Tibial artery (tissue), 4 donors: ENCODE measurements at regions of chr16 and their contacts with region 1.

Region 1: DNA sequence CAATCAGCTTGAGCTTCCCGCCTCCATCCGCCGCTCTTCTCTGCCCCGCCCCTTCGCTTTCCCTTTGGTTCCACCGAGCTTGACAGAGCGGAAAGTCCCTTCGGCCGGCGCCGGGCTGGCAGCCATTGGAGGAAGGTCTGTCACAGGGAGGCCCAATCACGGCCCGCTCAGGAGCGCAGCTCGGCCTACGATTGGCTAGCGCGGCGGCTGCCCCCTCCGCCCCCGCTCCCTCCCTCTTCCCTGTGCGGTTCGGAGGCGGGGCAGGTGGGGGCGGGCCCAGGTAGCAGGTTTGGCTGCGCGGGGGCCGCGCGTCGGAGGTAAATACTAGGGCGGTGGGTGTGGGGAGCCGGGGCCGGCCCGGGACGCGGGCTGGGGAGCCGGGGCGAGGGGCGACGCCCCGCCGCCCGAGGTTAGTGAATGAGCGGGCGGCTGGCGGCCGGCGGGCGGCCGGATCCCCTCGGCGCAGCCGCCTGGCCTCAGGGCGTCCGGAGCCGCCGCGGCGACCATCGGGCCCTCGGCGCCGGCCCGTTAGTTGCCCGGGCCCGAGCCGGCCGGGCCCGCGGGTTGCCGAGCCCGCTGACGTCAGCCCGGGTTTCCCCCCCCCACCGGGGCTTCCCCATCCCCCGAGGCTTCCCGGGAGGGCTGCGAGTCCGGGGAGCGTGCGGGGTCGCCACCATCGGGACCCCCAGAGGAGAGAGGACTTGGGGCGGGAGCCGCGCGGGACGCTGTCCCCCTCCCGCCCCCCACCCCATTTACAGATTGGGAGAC is at the start of gene CYLD:
- DNase-seq: peak; percentile 100
- H3K4me3 ChIP-seq: peak within 1 kb of the TSS; percentile 82 to 90
- H3K27ac ChIP-seq: peak within 1 kb of the TSS; percentile 89
- H3K4me1 ChIP-seq: peaks cover 0 to 47% (median 27%) of the 10 kb centered on the region in 4 donors
- H3K27me3 ChIP-seq: no peaks in the 10 kb centered on the region
- CTCF ChIP-seq: no peak

Region 2: GRCh38 chr16:49855280-49855821 is 886.6 kb before region 1 on chr16:
- intact Hi-C with region 1: loop called (anchors 10 kb)
- DNase-seq: peak; percentile 82 to 95
- H3K4me3 ChIP-seq: peak overlapping the region; percentile 74 to 86
- H3K27ac ChIP-seq: peak overlapping the region; percentile 86 to 89
- H3K4me1 ChIP-seq: peaks cover 0 to 47% (median 34%) of the 10 kb centered on the region in 4 donors
- H3K27me3 ChIP-seq: no peaks in the 10 kb centered on the region
- CTCF ChIP-seq: no peak

Region 3: GRCh38 chr16:50002190-50002589 is 739.8 kb before region 1 on chr16:
- intact Hi-C with region 1: no loop called
- DNase-seq: no peak
- H3K4me3 ChIP-seq: no peak overlapping the region
- H3K27ac ChIP-seq: no peak overlapping the region
- H3K4me1 ChIP-seq: no peaks in the 10 kb centered on the region
- H3K27me3 ChIP-seq: no peaks in the 10 kb centered on the region
- CTCF ChIP-seq: no peak

Region 4: DNA sequence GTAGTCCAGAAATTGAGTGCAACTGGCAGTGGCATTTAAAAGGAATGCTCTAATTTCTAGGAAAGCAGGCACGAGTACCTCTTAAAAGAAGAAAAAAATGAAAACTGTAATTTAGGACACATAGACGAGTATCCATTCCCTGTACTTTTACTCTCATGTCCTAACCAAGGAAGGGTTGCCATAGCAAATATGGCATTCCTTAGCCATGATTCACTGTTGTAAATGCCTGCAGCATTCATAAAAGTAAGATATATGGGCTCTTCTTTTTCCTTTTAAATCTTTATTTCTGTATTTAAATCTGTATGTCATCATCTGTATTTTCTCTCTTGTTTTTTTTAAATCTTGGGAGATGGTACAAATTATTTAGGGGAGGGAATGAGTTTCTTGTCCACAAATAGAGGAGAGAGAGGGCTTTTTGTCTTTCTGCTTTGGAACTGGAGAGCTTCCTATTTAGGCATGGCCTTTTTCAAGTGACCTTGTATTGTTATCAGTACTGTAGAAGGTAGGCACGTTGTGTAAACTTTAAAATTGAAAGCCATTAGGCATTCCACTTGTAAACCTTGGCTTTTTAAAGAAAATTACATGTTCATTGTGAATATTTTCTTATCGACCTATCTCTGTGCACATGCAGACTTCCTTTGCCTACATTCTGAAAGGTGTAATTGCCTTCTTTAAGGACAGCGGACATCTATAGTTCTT is 538.9 kb before region 1 on chr16:
- intact Hi-C with region 1: loop called (anchors 10 kb)
- DNase-seq: no peak
- H3K4me3 ChIP-seq: no peak overlapping the region
- H3K27ac ChIP-seq: peak overlapping the region; percentile 61 to 63
- H3K4me1 ChIP-seq: peaks cover 0 to 76% (median 50%) of the 10 kb centered on the region in 4 donors
- H3K27me3 ChIP-seq: no peaks in the 10 kb centered on the region
- CTCF ChIP-seq: no peak

Region 5: DNA sequence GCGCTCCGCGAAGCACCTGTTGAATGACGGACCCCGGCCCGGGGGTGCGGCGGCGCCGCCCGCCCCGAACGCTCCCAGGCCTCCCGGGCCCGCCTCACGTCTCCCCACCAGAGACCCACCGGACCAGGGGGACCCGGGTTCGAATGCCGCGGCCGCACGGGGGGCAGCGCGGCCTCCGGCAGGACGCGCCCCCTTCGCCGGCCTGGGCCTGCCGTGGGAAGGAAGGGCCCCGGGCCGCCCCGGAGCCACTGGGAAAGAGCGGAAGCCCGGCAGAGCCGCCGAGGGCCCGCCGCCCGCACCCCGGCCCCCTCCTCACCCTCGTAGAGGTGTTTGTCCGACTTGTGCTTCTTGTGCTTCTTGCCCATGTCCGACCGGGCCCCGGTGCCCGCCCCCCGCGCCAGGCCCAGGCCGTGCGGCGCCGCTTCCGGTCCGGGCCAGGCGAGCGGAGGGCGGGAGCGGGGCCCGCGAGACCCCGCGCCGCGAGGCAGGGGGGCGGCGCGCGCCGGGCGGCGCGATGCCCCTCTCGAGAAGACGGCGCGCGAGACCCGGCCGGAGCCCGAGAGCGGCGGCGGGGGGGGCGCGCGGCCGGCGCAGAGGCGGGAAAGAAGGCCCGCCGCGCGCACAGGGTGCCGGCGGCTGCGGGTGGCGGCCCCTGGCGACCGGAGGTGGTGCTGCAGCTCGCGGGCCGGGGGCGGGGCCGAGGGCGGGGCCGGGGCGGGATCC is 373.4 kb before region 1 on chr16 and contains the start of gene BRD7:
- intact Hi-C with region 1: loop called (anchors 10 kb)
- DNase-seq: peak; percentile 33 to 85
- H3K4me3 ChIP-seq: peak within 1 kb of the TSS; percentile 87 to 97
- H3K27ac ChIP-seq: peak within 1 kb of the TSS; percentile 77 to 87
- H3K4me1 ChIP-seq: peaks cover 0 to 70% (median 44%) of the 10 kb centered on the region in 4 donors
- H3K27me3 ChIP-seq: no peaks in the 10 kb centered on the region
- CTCF ChIP-seq: peak; percentile 40 to 73

Region 6: GRCh38 chr16:50548125-50548908 is 193.7 kb before region 1 on chr16 and contains the start of gene NKD1:
- intact Hi-C with region 1: loop called (anchors 5 kb)
- DNase-seq: peak; percentile 71 to 89
- H3K4me3 ChIP-seq: peak within 1 kb of the TSS; percentile 89 to 99
- H3K27ac ChIP-seq: peak within 1 kb of the TSS; percentile 87 to 89
- H3K4me1 ChIP-seq: peaks cover 0 to 41% (median 21%) of the 10 kb centered on the region in 4 donors
- H3K27me3 ChIP-seq: no peaks in the 10 kb centered on the region
- CTCF ChIP-seq: no peak

Region 7: DNA sequence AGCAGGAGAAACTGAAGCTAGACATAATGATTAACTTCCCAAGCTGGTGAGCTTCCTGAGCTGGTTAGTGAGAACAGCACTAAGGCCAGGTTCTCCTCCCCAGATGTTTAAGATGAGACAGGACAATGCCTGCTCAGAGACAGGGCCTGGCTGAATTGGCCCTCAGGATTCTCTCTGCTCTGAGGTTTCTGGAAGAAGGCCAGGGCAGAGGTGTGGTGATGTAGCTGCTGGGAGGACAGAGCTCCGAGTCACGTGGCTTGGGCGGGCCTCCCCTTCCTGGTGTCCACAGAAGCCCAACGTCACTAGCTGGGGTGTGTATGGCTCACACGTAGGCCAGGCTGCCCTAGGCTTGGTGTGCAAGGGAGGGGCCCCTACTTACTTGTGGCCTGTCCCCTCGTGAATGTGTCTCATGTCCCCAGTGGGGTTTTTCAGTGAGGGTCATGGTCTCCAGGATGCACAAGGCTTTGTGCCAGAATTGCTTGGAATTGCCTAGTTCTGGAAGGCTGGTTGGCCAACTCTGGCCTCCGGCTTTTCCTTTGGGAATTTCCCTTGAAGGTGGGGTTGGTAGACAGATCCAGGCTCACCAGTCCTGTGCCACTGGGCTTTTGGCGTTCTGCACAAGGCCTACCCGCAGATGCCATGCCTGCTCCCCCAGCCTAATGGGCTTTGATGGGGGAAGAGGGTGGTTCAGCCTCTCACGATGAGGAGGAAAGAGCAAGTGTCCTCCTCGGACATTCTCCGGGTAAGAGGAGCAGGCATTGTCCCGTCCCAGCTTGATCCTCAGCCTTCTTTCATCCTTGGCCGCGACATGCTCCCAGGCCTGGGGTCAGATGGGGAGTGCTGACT is 45.2 kb before region 1 on chr16:
- intact Hi-C with region 1: loop called (anchors 10 kb)
- DNase-seq: peak; percentile 83 to 84
- H3K4me3 ChIP-seq: no peak overlapping the region
- H3K27ac ChIP-seq: peak overlapping the region; percentile 45 to 60
- H3K4me1 ChIP-seq: peaks cover 0 to 36% (median 19%) of the 10 kb centered on the region in 4 donors
- H3K27me3 ChIP-seq: no peaks in the 10 kb centered on the region
- CTCF ChIP-seq: no peak